ENCODE measurements at regions of chr6 and their contacts with region 1.

Region 1: GRCh38 chr6:42745707-42746462 is at the start of gene TBCC:
- DNase-seq: peak; percentile 93
- ATAC-seq: peak; percentile 78
- H3K4me3 Mint-ChIP-seq: peak within 1 kb of the TSS; percentile 100
- H3K27ac Mint-ChIP-seq: peak within 1 kb of the TSS; percentile 100
- H3K4me1 Mint-ChIP-seq: peaks cover 16% of the 10 kb centered on the region
- H3K27me3 Mint-ChIP-seq: no peaks in the 10 kb centered on the region
- CTCF ChIP-seq: no peak
- total RNA-seq, gene TBCC: 24.7 to 27.3 TPM (median 25.0 TPM) in 3 replicates

Region 2: GRCh38 chr6:42674780-42675179 is 71.1 kb before region 1 on chr6:
- CTCF ChIA-PET with region 1: no interaction called
- POLR2A ChIA-PET with region 1: no interaction called
- DNase-seq: no peak
- ATAC-seq: no peak
- H3K4me3 Mint-ChIP-seq: no peak overlapping the region
- H3K27ac Mint-ChIP-seq: no peak overlapping the region
- H3K4me1 Mint-ChIP-seq: no peaks in the 10 kb centered on the region
- H3K27me3 Mint-ChIP-seq: no peaks in the 10 kb centered on the region
- CTCF ChIP-seq: no peak

Region 3: DNA sequence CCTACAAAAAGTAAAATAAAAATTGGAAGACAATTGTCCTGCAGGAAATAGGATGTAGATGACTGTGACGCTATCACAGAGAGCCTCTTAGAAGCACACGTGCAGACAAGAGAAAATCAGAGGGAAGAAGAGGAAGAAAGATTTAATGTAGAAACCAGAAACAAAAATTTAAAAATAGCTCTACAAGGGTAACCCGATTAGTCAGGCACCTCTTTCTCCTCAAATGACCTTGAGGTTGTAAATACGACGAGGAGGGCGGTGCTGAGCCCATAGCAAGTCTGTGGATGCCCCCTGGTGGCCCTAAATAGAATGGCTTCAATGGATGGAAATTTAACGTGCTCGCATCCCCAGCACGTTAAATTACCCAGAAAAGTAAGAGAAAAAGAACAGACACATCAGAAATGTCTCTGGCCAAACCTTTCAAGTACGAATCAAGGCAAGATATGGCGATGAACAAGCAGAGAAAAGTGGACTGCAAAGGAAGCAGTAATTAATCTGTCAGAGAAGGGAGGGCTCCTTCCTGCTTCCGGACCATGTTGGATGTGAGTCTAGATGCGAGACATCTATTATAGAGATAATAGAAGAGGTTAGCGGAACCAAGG is 19.3 kb before region 1 on chr6:
- CTCF ChIA-PET with region 1: interaction called, 18 read pairs
- POLR2A ChIA-PET with region 1: interaction called, 12 read pairs
- DNase-seq: peak; percentile 58
- ATAC-seq: peak; percentile 93
- H3K4me3 Mint-ChIP-seq: no peak overlapping the region
- H3K27ac Mint-ChIP-seq: peak overlapping the region; percentile 25; the same call in 1 of the 2 replicates
- H3K4me1 Mint-ChIP-seq: peaks cover 9% of the 10 kb centered on the region
- H3K27me3 Mint-ChIP-seq: no peaks in the 10 kb centered on the region; the same call in 1 of the 2 replicates
- CTCF ChIP-seq: peak; percentile 88

Region 4: GRCh38 chr6:42771741-42772100 is 25.8 kb after region 1 on chr6:
- CTCF ChIA-PET with region 1: interaction called, 7 read pairs
- POLR2A ChIA-PET with region 1: interaction called, 16 read pairs
- DNase-seq: no peak
- ATAC-seq: no peak
- H3K4me3 Mint-ChIP-seq: peak overlapping the region; percentile 66
- H3K27ac Mint-ChIP-seq: peak overlapping the region; percentile 77
- H3K4me1 Mint-ChIP-seq: peaks cover 29% of the 10 kb centered on the region
- H3K27me3 Mint-ChIP-seq: no peaks in the 10 kb centered on the region
- CTCF ChIP-seq: no peak

Region 5: GRCh38 chr6:42841844-42842584 is 96.1 kb after region 1 on chr6:
- CTCF ChIA-PET with region 1: no interaction called
- POLR2A ChIA-PET with region 1: no interaction called
- DNase-seq: no peak
- ATAC-seq: no peak
- H3K4me3 Mint-ChIP-seq: no peak overlapping the region
- H3K27ac Mint-ChIP-seq: no peak overlapping the region; the same call in 1 of the 2 replicates
- H3K4me1 Mint-ChIP-seq: no peaks in the 10 kb centered on the region
- H3K27me3 Mint-ChIP-seq: no peaks in the 10 kb centered on the region
- CTCF ChIP-seq: no peak

Region 6: GRCh38 chr6:42879372-42880239 is 133.7 kb after region 1 on chr6 and contains the start of gene RPL7L1:
- CTCF ChIA-PET with region 1: interaction called, 4 read pairs
- POLR2A ChIA-PET with region 1: interaction called, 11 read pairs
- DNase-seq: peak; percentile 70
- ATAC-seq: peak; percentile 92
- H3K4me3 Mint-ChIP-seq: peak within 1 kb of the TSS; percentile 100
- H3K27ac Mint-ChIP-seq: peak within 1 kb of the TSS; percentile 100
- H3K4me1 Mint-ChIP-seq: peaks cover 8% of the 10 kb centered on the region; the same call in 1 of the 2 replicates
- H3K27me3 Mint-ChIP-seq: no peaks in the 10 kb centered on the region
- CTCF ChIP-seq: no peak
- total RNA-seq, gene RPL7L1: 91.4 to 107 TPM (median 93.0 TPM) in 3 replicates